IMR-90 (cell line): ENCODE measurements at regions of chr2 and their contacts with region 1.

Region 1: GRCh38 chr2:232567721-232568120 is 17.2 kb downstream of the EIF4E2 start:
- DNase-seq: no peak
- ATAC-seq: peak; percentile 8; the same call in 1 of the 2 replicates
- H3K4me3 ChIP-seq: no peak overlapping the region
- H3K27ac ChIP-seq: no peak overlapping the region
- H3K4me1 ChIP-seq: no peaks in the 10 kb centered on the region; the same call in 1 of the 2 replicates
- H3K27me3 ChIP-seq: no peaks in the 10 kb centered on the region
- CTCF ChIP-seq: no peak
- POLR2A ChIP-seq: no peak
- RAD21 ChIP-seq: no peak

Region 2: DNA sequence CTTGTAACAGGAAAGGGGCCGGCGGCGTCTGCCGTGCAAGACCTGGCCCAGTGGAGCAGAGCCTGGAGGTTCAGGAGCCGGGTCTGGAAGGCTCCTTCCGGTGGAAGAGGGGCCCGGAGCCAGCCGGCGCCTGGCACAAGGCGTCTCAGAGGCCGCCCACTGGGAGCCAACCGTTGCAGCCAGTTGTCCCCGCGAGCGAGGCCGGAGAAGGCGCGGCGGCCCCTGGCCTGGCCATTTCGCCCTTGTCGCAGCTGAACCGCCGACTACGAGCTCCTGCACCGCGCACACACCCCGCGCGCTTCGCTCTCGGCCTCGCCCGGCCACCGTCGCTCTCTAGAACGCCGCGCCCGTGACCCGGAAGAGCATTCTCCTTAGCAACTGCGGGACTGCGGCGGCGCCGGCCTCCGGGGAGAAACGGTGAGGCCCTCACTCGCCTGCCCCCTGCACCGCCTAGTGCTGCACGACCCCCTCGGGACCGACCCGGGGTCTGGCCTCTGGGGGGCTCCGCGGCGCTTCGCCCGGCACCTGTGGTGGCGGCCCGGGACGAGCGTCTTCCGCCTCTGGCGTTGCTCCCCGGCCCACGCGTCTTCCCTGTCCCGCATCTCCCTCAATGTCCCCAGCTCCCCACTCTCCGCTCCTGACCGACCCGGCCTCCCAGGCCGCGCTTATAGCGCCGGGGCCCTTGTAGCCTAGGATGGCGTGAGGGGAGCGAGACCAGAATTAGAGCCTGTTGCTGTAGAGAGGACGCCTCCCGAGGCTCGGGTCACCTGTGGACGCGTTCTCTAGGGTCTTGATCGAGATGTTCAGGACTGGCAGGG is 606.2 kb before region 1 on chr2 and contains the start of gene DIS3L2:
- CTCF ChIA-PET with region 1: no interaction called
- POLR2A ChIA-PET with region 1: interaction called, 10 read pairs
- dilution Hi-C with region 1: no loop called
- in situ Hi-C with region 1: no loop called
- intact Hi-C with region 1: no loop called
- DNase-seq: peak; percentile 70
- ATAC-seq: peak; percentile 98
- H3K4me3 ChIP-seq: peak within 1 kb of the TSS; percentile 92
- H3K27ac ChIP-seq: peak within 1 kb of the TSS; percentile 85
- H3K4me1 ChIP-seq: peaks cover 3% of the 10 kb centered on the region; the same call in 1 of the 2 replicates
- H3K27me3 ChIP-seq: no peaks in the 10 kb centered on the region
- CTCF ChIP-seq: no peak
- POLR2A ChIP-seq: peak; percentile 20; the same call in 1 of the 2 replicates
- RAD21 ChIP-seq: no peak
- total RNA-seq, gene DIS3L2: 16.7 and 19.2 TPM in 2 replicates